AG04450 (cell line): ENCODE measurements at regions of chr2 and their contacts with region 1.

Region 1: GRCh38 chr2:200963124-200963917 is at the start of gene ORC2:
- DNase-seq: peak; percentile 80
- H3K4me3 ChIP-seq: peak within 1 kb of the TSS; percentile 94
- H3K27ac ChIP-seq: peak within 1 kb of the TSS; percentile 62
- H3K27me3 ChIP-seq: no peaks in the 10 kb centered on the region
- CTCF ChIP-seq: peak; percentile 65
- polyA plus RNA-seq, gene ORC2: 4.7 and 4.9 TPM in 2 replicates

Region 2: GRCh38 chr2:200864176-200864976 is 98.9 kb before region 1 on chr2 and contains the start of gene CLK1:
- CTCF ChIA-PET with region 1: no interaction called
- POLR2A ChIA-PET with region 1: interaction called, 12 read pairs
- DNase-seq: peak; percentile 81
- H3K4me3 ChIP-seq: peak within 1 kb of the TSS; percentile 76
- H3K27ac ChIP-seq: peak within 1 kb of the TSS; percentile 98
- H3K27me3 ChIP-seq: no peaks in the 10 kb centered on the region
- CTCF ChIP-seq: no peak
- polyA plus RNA-seq, gene CLK1: 66.0 and 103 TPM in 2 replicates

Region 3: DNA sequence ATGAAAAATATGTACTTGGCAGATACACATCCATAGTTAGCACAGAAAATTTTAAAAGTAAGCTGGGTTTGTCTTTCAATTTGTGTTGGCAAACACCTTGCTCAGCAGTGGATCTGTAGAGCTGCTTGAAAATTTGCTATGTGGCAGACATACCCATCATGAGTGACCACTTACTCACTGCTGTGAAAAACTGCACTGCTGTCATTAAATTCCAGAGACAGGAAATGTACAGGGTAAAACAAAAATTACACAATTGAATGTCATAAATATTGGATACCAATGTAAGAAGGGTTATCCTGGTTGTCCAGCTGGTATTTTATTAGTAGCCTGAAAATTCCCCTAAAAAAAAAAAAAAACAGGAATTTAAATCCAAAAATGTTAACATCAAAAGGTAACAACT is 49.7 kb before region 1 on chr2:
- CTCF ChIA-PET with region 1: no interaction called
- POLR2A ChIA-PET with region 1: no interaction called
- DNase-seq: no peak
- H3K4me3 ChIP-seq: no peak overlapping the region
- H3K27ac ChIP-seq: no peak overlapping the region
- H3K27me3 ChIP-seq: no peaks in the 10 kb centered on the region
- CTCF ChIP-seq: no peak

Region 4: DNA sequence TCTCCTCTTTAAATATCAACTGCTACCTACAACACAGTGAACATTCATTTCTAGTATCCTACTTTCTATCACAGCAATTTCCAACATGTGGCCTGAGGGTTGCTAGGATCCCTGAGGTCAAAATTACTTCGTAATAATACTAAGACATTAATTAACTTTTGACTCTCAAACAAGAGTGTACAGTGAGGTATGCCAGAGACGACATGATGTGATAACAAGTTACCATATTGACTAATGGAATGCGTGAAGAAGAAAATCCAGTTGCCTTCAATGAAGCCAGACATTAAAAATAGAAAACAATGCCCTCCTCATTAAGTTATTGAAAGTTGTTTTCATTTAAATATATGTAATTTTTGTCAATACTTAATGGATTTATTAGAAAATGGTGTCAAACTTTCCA is 12.9 kb before region 1 on chr2:
- CTCF ChIA-PET with region 1: interaction called, 10 read pairs
- POLR2A ChIA-PET with region 1: interaction called, 3 read pairs
- DNase-seq: no peak
- H3K4me3 ChIP-seq: no peak overlapping the region
- H3K27ac ChIP-seq: no peak overlapping the region
- H3K27me3 ChIP-seq: no peaks in the 10 kb centered on the region
- CTCF ChIP-seq: no peak

Region 5: DNA sequence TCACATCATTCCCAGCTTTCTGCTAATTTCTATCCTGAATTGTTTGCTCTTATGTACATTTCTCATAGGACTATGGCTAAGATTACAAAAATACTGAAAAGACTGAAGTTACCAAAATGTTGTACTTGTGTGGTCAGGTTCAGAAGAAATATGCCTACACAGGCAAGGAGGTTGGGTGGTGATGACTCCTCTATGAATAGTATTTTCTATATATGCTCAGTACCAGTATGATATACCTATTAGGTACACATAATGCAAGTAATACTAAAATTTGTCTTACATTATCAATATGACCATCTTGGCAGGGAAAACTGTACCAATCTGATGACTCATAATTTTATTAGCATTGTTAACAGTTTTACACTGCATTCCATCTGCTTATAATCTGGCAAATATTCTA is 12.4 kb after region 1 on chr2:
- CTCF ChIA-PET with region 1: interaction called, 24 read pairs
- POLR2A ChIA-PET with region 1: no interaction called
- DNase-seq: no peak
- H3K4me3 ChIP-seq: no peak overlapping the region
- H3K27ac ChIP-seq: no peak overlapping the region
- H3K27me3 ChIP-seq: no peaks in the 10 kb centered on the region
- CTCF ChIP-seq: no peak